B cell (primary cell): ENCODE measurements at regions of chr3 and their contacts with region 1.

Region 1: DNA sequence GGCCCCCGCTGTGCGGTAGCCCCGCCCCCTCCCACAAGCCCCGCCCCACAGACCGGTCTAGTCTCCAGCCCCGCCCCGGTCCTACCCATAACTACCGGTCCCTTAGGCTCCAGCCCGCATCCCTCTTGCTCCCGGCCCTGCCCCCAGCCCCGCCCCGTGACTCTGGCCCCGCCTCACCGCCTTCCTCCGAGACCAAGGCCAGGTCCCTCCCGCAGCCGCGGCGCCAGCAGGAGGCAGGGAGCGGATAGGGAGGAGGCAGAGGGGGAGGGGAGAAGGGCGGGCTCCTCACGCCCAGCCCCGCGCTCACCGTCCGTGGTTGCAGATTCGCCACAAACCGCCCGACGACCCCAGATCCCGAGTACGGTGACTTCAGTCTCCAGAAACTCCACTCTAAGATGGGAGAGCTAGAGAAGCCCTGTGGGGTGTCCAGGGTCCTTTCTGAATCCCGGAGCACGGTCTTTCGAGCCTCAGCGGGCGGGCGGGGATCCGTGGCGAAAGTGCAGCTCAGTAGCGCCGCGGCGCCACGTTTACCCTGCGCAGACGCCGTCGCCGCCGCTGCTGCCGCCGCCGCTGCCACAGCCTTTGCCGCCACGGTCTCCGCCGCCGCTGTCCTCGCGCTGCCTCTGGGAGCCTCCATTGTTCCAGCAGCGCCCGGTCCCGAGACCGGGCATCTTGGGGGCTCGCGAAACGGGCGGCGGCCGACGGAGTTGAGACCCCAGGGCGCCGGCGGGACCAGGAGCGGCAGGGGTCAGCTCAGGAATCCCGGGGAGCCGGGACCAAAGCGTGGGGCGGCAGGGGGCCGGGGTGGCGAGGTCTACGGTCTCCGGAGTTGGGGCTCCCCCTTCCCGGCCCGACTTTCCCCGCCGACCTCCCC is at the start of gene BRPF1:
- DNase-seq: peak; percentile 99
- ATAC-seq: peak; percentile 94
- H3K4me3 ChIP-seq: peak within 1 kb of the TSS; percentile 76 to 93 (median 81)
- H3K4me3 Mint-ChIP-seq: peak within 1 kb of the TSS; percentile 97
- H3K27ac ChIP-seq: peak within 1 kb of the TSS; percentile 87 to 94
- H3K27ac Mint-ChIP-seq: peak within 1 kb of the TSS; percentile 97
- H3K4me1 ChIP-seq: peaks cover 28 to 36% of the 10 kb centered on the region in 2 donors
- H3K4me1 Mint-ChIP-seq: peaks cover 59% of the 10 kb centered on the region
- H3K27me3 ChIP-seq: no peaks in the 10 kb centered on the region
- H3K27me3 Mint-ChIP-seq: no peaks in the 10 kb centered on the region
- CTCF ChIP-seq: no peak
- total RNA-seq, gene BRPF1: 36.5 and 40.1 TPM in 2 replicates

Region 2: DNA sequence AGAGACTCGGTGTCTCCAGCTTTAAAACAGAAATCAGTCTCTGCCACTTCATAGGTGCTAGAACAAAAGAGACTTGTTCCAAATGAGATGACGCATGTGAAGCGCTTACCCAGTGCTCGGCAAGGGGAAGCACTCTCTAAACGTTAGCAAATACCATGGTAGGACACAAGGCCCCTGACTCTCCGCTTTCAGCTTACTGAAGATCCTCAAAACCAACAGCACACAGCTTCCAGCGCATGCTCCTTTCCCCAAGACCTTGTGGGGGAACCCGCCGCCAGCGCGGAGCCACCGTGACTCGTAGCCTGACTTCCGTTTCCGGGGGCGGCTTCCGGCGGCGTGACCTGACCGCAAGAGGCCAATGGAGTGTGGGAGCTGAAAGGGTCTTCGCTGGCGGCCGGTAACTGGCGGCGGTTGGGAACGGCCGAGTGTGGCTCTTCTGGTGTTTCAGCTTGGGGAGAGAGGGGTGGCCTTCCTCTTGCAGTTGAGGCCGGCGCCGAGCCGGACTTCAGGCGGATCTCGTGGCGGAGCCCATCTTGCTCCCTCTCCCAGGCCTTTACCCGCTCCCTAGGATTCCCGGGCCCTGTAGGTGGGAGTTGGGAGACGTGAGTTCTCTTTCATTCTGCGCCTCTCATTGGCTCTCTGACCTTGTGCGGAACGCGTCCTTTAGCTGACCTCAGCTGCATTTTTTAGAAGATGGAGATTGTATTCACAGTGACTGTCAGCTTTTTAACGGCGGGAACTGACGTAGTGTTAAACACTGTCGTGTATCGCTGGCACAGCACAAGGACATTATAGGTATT is 368.5 kb before region 1 on chr3 and contains the start of gene THUMPD3:
- CTCF ChIA-PET with region 1: no interaction called
- POLR2A ChIA-PET with region 1: interaction called, 8 read pairs
- intact Hi-C with region 1: loop called (anchors 1 kb)
- DNase-seq: peak; percentile 93
- ATAC-seq: peak; percentile 89
- H3K4me3 ChIP-seq: peak within 1 kb of the TSS; percentile 58 to 97 (median 92)
- H3K4me3 Mint-ChIP-seq: peak within 1 kb of the TSS; percentile 99
- H3K27ac ChIP-seq: peak within 1 kb of the TSS; percentile 85 to 95
- H3K27ac Mint-ChIP-seq: peak within 1 kb of the TSS; percentile 95
- H3K4me1 ChIP-seq: peaks cover 7 to 18% of the 10 kb centered on the region in 2 donors
- H3K4me1 Mint-ChIP-seq: peaks cover 14% of the 10 kb centered on the region
- H3K27me3 ChIP-seq: no peaks in the 10 kb centered on the region
- H3K27me3 Mint-ChIP-seq: no peaks in the 10 kb centered on the region
- CTCF ChIP-seq: no peak
- total RNA-seq, gene THUMPD3: 30.6 and 32.1 TPM in 2 replicates

Region 3: DNA sequence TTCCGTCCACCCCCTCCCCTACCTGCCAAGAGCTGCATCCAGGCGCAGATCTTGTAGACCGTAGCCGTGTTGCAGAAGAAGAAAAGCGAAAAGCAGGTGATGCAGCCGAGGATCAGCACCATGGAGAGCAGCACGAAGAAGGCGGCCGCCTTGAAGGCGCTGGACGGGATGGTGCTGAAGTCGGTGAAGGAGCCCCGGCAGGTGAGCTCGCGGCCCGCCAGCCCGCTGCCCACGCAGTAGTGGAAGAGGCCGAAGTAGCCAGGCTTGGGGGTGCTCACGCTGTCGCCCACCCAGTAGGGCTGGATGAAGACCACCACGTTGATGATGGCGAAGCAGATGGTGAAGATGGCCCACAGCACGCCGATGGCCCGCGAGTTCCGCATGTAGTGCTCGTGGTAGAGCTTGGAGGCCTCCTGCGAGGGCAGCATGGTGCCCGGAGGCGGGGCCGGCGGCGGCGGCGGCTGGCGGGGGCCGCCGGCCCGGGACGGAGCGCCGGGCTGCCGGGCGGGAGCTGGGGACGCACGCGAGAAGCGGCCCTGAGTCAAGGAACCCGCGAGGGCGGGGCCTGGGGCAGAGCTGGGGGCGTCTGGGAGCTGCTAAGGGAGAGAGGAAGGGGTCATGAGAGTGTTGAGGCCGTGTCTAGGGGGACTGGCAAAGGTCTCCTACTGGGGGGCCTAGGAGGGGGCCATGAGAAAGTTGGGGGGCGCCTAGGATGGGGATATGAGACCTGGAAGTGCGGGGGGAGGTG is 179.0 kb before region 1 on chr3:
- CTCF ChIA-PET with region 1: no interaction called
- POLR2A ChIA-PET with region 1: no interaction called
- intact Hi-C with region 1: no loop called
- DNase-seq: peak; percentile 27
- ATAC-seq: no peak
- H3K4me3 ChIP-seq: no peak overlapping the region
- H3K4me3 Mint-ChIP-seq: peak overlapping the region; percentile 10
- H3K27ac ChIP-seq: no peak overlapping the region
- H3K27ac Mint-ChIP-seq: no peak overlapping the region
- H3K4me1 ChIP-seq: peaks cover 3 to 6% of the 10 kb centered on the region in 2 donors
- H3K4me1 Mint-ChIP-seq: peaks cover 8% of the 10 kb centered on the region
- H3K27me3 ChIP-seq: peaks cover 0 to 53% (median 17%) of the 10 kb centered on the region in 4 experiments
- H3K27me3 Mint-ChIP-seq: peaks cover 69% of the 10 kb centered on the region
- CTCF ChIP-seq: no peak

Region 4: GRCh38 chr3:9649791-9650521 is 81.5 kb before region 1 on chr3:
- CTCF ChIA-PET with region 1: interaction called, 17 read pairs
- POLR2A ChIA-PET with region 1: interaction called, 3 read pairs
- intact Hi-C with region 1: loop called (anchors 1 kb)
- DNase-seq: peak; percentile 81
- ATAC-seq: peak; percentile 44
- H3K4me3 ChIP-seq: peak overlapping the region; percentile 85 to 99 (median 99)
- H3K4me3 Mint-ChIP-seq: peak overlapping the region; percentile 95
- H3K27ac ChIP-seq: peak overlapping the region; percentile 92 to 95
- H3K27ac Mint-ChIP-seq: peak overlapping the region; percentile 97
- H3K4me1 ChIP-seq: peaks cover 43 to 59% of the 10 kb centered on the region in 2 donors
- H3K4me1 Mint-ChIP-seq: peaks cover 48% of the 10 kb centered on the region
- H3K27me3 ChIP-seq: no peaks in the 10 kb centered on the region
- H3K27me3 Mint-ChIP-seq: no peaks in the 10 kb centered on the region
- CTCF ChIP-seq: no peak

Region 5: DNA sequence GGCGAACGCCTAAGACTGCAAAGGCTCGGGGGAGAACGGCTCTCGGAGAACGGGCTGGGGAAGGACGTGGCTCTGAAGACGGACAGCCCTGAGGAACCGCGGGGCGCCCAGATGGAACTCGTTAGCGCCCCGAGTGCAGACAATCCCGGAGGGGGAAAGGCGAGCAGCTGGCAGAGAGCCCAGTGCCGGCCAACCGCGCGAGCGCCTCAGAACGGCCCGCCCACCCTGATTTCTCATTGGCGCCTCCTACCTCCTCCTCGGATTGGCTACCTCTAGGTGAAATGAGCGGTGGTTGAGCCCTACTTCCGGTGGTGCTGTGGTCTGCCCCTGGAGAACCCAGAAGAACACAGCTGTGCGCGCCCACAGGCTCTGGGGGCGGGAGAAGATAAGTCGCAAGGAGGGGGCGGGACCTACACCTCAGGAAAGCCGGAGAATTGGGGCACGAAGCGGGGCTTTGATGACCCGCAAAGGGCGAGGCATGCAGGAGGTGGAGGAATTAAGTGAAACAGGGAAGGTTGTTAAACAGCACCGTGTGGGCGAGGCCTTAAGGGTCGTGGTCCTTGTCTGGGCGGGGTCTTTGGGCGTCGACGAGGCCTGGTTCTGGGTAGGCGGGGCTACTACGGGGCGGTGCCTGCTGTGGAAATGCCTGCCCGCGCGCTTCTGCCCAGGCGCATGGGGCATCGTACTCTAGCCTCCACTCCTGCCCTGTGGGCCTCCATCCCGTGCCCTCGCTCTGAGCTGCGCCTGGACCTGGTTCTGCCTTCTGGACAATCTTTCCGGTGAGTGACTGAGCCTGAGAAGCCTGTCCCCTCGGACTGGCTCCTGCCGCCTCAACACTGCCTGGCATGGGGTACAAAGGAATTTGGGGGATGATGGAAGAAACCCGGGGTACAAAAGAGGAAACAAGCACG is 18.5 kb after region 1 on chr3 and contains the start of gene OGG1:
- CTCF ChIA-PET with region 1: interaction called, 17 read pairs
- POLR2A ChIA-PET with region 1: interaction called, 18 read pairs
- intact Hi-C with region 1: loop called (anchors 1 kb)
- DNase-seq: peak; percentile 98
- ATAC-seq: peak; percentile 90
- H3K4me3 ChIP-seq: peak within 1 kb of the TSS; percentile 53 to 87 (median 80)
- H3K4me3 Mint-ChIP-seq: peak within 1 kb of the TSS; percentile 92
- H3K27ac ChIP-seq: peak within 1 kb of the TSS; percentile 58 to 64
- H3K27ac Mint-ChIP-seq: peak within 1 kb of the TSS; percentile 94
- H3K4me1 ChIP-seq: peaks cover 31 to 36% of the 10 kb centered on the region in 2 donors
- H3K4me1 Mint-ChIP-seq: peaks cover 49% of the 10 kb centered on the region
- H3K27me3 ChIP-seq: no peaks in the 10 kb centered on the region
- H3K27me3 Mint-ChIP-seq: no peaks in the 10 kb centered on the region
- CTCF ChIP-seq: no peak
- total RNA-seq, gene OGG1: 81.6 and 90.8 TPM in 2 replicates

Region 6: GRCh38 chr3:9843715-9844438 is 112.4 kb after region 1 on chr3 and contains the start of gene RPUSD3:
- CTCF ChIA-PET with region 1: no interaction called
- POLR2A ChIA-PET with region 1: no interaction called
- intact Hi-C with region 1: loop called (anchors 1 kb)
- DNase-seq: peak; percentile 97
- ATAC-seq: peak; percentile 100
- H3K4me3 ChIP-seq: peak within 1 kb of the TSS; percentile 60 to 96 (median 73)
- H3K4me3 Mint-ChIP-seq: peak within 1 kb of the TSS; percentile 98
- H3K27ac ChIP-seq: peak within 1 kb of the TSS; percentile 17 to 75
- H3K27ac Mint-ChIP-seq: peak within 1 kb of the TSS; percentile 92
- H3K4me1 ChIP-seq: peaks cover 8 to 17% of the 10 kb centered on the region in 2 donors
- H3K4me1 Mint-ChIP-seq: peaks cover 20% of the 10 kb centered on the region
- H3K27me3 ChIP-seq: no peaks in the 10 kb centered on the region
- H3K27me3 Mint-ChIP-seq: no peaks in the 10 kb centered on the region
- CTCF ChIP-seq: no peak
- total RNA-seq, gene RPUSD3: 60.7 and 62.1 TPM in 2 replicates

Region 7: DNA sequence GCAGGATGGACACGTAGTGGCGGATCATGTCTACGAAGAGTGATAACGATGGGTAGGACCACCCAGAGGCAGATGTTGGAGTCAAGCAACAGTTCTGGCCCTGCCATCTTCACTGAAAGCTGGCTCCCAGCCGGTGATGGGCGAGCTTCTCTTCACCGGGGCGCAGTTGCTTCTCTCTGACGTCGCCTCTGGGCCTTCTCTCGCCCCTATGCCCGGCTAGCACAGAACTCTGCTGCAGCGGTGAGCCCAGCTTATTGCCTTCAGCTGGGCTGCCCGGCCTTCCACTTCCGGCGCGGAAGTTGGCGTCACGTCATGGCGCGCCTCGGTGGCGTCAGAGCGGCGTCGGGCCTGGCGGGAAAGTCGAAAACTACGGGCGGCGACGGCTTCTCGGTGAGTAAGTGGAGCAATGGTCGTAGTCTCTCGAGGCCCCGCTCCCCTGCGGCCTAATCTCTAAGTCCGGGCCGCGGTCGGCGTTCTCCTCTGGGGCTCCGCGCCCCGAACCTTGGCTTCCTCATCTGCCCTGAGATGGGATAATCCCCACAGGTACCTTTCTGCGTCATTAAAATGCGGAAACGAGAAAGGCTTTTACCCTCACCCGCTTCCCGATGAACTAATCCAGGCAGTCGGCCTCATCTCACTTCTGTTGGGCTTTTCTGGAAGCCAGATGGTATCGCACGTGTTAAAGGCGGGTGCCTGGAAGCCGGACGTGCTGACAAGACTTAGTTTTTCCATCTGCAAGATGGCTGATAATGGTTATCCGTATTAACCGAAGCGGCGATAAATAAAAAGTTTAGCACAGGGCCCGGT is 294.8 kb after region 1 on chr3 and contains the start of gene FANCD2:
- CTCF ChIA-PET with region 1: no interaction called
- POLR2A ChIA-PET with region 1: no interaction called
- intact Hi-C with region 1: loop called (anchors 1 kb)
- DNase-seq: peak; percentile 96
- ATAC-seq: peak; percentile 83
- H3K4me3 ChIP-seq: peak within 1 kb of the TSS; percentile 83 to 94 (median 91)
- H3K4me3 Mint-ChIP-seq: peak within 1 kb of the TSS; percentile 99
- H3K27ac ChIP-seq: peak within 1 kb of the TSS; percentile 94 to 96
- H3K27ac Mint-ChIP-seq: peak within 1 kb of the TSS; percentile 96
- H3K4me1 ChIP-seq: peaks cover 18 to 23% of the 10 kb centered on the region in 2 donors
- H3K4me1 Mint-ChIP-seq: peaks cover 34% of the 10 kb centered on the region
- H3K27me3 ChIP-seq: no peaks in the 10 kb centered on the region
- H3K27me3 Mint-ChIP-seq: no peaks in the 10 kb centered on the region
- CTCF ChIP-seq: no peak
- total RNA-seq, gene FANCD2: 31.7 and 35.5 TPM in 2 replicates